Posterior vena cava (tissue), 2 donors: ENCODE measurements at regions of chr3 and their contacts with region 1.

Region 1: GRCh38 chr3:128889139-128889894 is 9.9 kb downstream of the ACAD9 start:
- DNase-seq: no peak

Region 2: DNA sequence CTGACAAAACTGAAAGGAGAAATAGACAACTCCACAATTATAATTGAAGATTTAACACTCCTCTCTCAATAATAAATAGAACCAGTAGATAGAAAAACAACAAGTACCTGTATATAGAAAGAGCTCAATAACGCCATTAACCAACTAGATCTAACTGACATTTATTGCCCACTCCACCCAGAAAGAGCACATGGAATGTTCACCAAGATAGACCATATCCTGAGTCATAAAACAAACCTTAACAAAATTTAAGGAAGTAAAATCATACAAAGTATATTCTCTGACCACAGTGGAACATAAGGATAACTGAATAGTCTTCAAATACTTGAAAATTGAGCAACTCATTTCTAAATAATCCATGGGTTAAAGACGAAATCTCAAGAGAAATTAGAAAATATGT is 949.2 kb before region 1 on chr3:
- intact Hi-C with region 1: no loop called
- DNase-seq: no peak

Region 3: DNA sequence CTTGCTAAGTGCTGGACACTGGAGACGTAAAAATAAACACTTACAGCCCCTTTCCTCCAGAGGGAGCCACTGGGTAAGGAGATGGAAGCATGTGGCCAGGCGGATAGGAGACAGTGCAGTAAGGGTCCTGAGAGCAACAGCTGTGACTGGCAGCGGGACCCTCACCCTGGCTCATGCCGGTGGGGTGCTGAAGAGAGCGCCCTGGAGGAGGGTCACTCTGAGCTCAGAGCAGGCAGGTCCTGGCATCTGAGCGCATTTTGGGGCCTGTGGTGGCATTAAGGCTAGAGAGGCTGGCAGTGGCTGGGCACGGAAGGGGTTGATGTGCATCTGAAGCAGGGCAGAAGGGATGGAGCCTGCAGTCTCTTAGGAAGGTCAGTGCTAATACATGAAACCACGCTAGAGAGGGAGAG is 821.1 kb before region 1 on chr3:
- intact Hi-C with region 1: no loop called
- DNase-seq: no peak

Region 4: GRCh38 chr3:128841926-128842920 is 47.1 kb before region 1 on chr3:
- intact Hi-C with region 1: no loop called
- DNase-seq: no peak

Region 5: DNA sequence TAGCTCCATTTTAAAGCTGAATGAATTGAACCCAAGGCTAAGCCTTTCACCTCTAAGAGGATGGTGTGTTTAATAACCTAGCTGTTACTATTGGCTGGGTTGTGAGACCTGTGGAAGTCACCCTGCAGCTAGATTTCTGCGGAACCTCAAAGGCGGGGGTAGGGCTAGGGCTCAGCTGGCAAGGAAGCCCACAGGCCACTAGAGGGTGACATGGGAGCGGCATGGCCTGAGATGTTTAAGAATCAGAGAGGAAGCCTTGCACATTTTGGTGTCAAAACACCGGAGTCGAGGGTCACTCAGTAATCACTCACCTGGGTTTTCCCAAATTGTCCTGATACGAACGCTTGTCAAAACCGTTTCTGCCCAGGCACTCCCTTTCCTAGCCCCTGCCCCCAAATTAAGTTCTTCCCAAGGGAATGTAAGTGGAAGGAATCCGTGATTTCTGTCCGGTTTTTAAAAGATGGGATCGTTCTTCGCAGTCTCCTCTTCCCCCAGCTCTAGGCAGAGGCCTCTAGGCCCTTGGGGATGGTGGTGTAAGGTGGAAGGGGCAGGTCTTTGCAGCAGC is 13.7 kb before region 1 on chr3:
- intact Hi-C with region 1: no loop called
- DNase-seq: no peak

Region 6: DNA sequence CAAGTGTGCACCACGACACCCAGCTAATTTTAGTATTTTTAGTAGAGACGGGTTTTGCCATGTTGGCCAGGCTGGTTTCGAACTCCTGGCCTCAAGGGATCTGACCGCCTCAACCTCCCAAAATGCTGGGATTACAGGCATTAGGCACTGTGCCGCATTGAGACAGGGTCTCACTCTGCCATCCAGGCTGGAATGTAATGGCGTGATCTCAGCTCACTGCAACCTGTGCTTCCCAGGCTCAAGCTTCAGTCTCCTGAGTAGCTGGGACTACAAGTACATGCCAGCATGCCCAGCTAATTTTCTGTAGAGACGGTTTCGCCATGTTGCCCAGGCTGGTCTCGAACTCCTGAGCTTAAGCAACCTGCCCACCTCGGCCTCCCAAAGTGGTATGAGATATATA is 41.7 kb after region 1 on chr3:
- intact Hi-C with region 1: loop called in 1 of 2 experiments (anchors 2 kb)
- DNase-seq: peak; percentile 49